Dorsolateral prefrontal cortex (tissue), 120 donors: ENCODE measurements at regions of chr2 and their contacts with region 1.

Region 1: DNA sequence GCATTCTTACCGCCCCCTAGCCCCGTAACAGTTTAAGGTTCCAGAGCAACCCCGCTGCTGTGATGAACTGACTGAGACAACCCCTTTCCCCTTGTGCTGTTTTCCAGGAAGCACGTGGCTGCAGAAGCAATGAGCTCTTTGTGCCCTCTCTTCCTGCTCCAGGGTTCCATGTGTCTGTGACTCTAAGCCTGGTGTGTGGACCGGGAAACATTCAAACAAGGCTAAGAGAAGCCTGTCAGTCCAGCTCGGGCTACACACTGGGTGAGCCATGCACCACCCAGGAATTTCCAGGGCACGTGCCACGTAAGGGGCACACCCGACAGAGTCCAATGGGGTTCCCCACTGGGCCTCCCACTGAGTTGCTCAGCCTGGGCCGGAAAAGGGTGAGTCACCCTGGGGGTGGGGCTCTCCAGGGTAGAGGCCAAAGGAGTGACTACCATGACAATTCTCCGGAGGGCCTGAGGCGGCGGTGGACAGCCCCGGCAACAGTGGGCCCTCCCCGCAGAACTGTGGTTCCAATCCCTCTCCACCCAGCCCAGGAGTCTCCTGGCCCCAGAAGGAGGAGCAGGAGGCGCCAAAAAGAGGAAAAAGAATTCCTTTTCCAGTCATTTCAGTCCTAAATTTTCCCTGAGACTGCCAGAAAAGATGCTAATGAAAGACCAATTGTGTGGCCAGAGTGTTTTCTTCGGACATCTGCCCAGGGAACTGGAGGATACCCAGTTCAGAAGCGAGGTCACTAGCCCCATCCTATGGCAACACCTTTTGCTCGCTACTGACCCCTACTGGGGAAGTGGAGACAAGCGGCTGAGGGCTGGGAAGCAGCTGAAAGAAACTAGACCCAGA is 157.8 kb upstream of the SLC1A4 start:
- DNase-seq: peak; percentile 18 to 85 (median 68)
- H3K4me3 ChIP-seq: peak overlapping the region in 43 of 59 donors; percentile 1 to 64 (median 31)
- H3K27ac ChIP-seq: peak overlapping the region in 58 of 59 donors; percentile 10 to 94 (median 82)
- H3K27me3 ChIP-seq: no peaks in the 10 kb centered on the region
- CTCF ChIP-seq: peak; percentile 30 to 92 (median 82)

Region 2: GRCh38 chr2:64675860-64676259 is 155.5 kb before region 1 on chr2:
- intact Hi-C with region 1: no loop called
- DNase-seq: peak in 8 of 10 donors; percentile 49 to 83 (median 61)
- H3K4me3 ChIP-seq: no peak overlapping the region
- H3K27ac ChIP-seq: peak overlapping the region in 2 of 59 donors; percentile 46
- H3K27me3 ChIP-seq: no peaks in the 10 kb centered on the region
- CTCF ChIP-seq: no peak

Region 3: DNA sequence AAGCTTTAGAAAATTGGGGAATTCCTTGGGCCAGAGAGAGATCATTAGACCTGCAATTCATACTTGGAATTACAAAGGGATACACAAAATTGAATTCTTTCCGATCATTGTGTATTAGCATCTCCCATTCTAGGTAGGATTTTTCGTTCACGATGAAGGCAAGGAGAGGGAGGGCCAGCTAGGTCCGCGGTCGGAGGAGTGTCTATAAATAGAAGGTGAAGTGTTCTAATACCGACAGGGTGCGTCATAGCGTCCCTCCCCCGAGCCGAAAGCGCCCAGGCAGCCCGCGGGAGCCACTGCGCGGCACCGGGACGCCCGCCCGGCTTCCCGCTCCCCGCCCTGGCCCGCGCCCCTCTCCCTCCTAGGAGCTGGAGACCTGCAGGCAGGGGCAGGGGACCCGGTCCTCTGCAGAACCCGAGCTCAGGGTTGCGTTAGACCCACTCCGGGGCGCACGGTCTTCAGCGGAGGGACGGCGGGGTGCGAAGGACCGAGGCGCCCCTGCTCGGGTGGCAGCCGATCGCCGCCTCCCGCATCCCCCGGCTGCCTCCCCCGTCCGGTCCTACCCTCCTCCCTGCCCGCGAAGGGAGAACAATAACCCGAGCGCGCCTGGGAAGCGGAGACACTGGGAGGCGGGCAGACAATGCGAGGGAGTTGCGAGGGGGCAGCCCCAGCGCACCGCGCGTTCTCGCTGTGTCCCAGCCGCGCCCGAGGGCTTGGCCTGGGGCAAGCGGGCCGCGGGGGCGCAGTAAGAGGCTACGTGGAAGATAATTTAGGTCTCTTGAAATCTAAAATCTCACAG is 63.5 kb before region 1 on chr2:
- intact Hi-C with region 1: loop called in 1 of 2 experiments (anchors 1 kb)
- DNase-seq: peak; percentile 72 to 92 (median 88)
- H3K4me3 ChIP-seq: peak overlapping the region; percentile 56 to 92 (median 81)
- H3K27ac ChIP-seq: peak overlapping the region; percentile 92 to 100 (median 99)
- H3K27me3 ChIP-seq: no peaks in the 10 kb centered on the region
- CTCF ChIP-seq: peak in 42 of 56 donors; percentile 4 to 63 (median 26)